Activated T-helper 2 cell treated with anti-CD3 and anti-CD28 coated beads, Interferon-gamma antibody, Interleukin-2, Interleukin-4, amounts not matched to agents 10 μg/mL and 5 μg/mL and 100 μg/mL, durations not matched to agents 14 hours and 24 hours and 36 hours (primary cell): ENCODE measurements at regions of chr2 and their contacts with region 1.

Region 1: GRCh38 chr2:72846538-72847095 is 20.8 kb upstream of the EXOC6B start:
- DNase-seq: no peak
- H3K4me3 Mint-ChIP-seq: no peak overlapping the region
- H3K27ac Mint-ChIP-seq: no peak overlapping the region
- H3K4me1 Mint-ChIP-seq: peaks cover 2% of the 10 kb centered on the region
- H3K27me3 Mint-ChIP-seq: peaks cover 7% of the 10 kb centered on the region

Region 2: GRCh38 chr2:72825241-72826155 is 21.1 kb before region 1 on chr2 and contains the start of gene EXOC6B:
- intact Hi-C with region 1: loop called (anchors 2 kb)
- DNase-seq: peak; percentile 79
- H3K4me3 Mint-ChIP-seq: peak within 1 kb of the TSS; percentile 89
- H3K27ac Mint-ChIP-seq: peak within 1 kb of the TSS; percentile 54
- H3K4me1 Mint-ChIP-seq: peaks cover 44% of the 10 kb centered on the region
- H3K27me3 Mint-ChIP-seq: peaks cover 2% of the 10 kb centered on the region
- total RNA-seq, gene EXOC6B: 9.3 and 9.4 TPM in 2 replicates

Region 3: GRCh38 chr2:73013936-73014335 is 167.3 kb after region 1 on chr2:
- intact Hi-C with region 1: no loop called
- DNase-seq: no peak
- H3K4me3 Mint-ChIP-seq: no peak overlapping the region
- H3K27ac Mint-ChIP-seq: no peak overlapping the region
- H3K4me1 Mint-ChIP-seq: no peaks in the 10 kb centered on the region
- H3K27me3 Mint-ChIP-seq: peaks cover 16% of the 10 kb centered on the region

Region 4: DNA sequence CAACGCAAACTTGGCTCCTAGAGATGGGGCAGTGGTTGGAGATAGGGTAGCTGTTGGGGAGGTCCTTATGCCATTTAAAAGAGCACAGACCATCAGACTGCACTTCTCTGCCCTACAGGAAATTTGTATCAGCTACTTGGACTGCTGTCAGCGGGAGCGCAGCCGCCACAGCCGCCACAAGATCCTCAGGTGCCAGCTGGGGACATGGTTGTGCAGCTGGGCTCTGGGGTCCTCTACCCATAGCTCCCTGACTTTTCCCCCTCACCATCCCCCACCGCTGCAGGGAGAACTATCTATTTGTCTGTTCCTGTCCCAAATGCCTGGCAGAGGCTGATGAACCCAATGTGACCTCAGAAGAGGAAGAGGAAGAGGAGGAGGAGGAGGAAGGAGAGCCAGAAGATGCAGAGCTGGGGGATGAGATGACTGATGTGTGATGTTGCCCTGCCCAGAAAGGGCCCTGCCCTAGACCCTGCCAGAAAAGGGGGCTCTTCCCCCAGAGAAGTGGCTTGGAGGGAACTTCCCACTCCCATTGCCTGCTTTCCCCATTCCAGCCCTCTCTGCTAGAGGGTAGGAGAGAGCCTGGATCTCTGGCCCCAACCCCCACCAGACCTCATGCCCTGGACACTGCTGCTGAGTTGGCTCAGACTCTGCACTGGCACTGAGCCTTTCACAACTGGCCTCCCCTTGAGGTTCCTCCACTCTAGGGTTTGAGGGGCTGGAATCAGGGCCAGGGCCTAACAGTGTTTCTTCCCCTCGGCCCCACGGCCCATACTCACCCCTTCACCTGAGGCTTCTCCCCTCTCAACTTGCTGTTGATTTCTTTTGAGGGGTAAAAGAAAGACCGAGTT is 379.1 kb after region 1 on chr2:
- intact Hi-C with region 1: no loop called
- DNase-seq: no peak
- H3K4me3 Mint-ChIP-seq: no peak overlapping the region
- H3K27ac Mint-ChIP-seq: no peak overlapping the region
- H3K4me1 Mint-ChIP-seq: peaks cover 2% of the 10 kb centered on the region
- H3K27me3 Mint-ChIP-seq: no peaks in the 10 kb centered on the region